ENCODE measurements at regions of chr2 and their contacts with region 1.

Region 1: DNA sequence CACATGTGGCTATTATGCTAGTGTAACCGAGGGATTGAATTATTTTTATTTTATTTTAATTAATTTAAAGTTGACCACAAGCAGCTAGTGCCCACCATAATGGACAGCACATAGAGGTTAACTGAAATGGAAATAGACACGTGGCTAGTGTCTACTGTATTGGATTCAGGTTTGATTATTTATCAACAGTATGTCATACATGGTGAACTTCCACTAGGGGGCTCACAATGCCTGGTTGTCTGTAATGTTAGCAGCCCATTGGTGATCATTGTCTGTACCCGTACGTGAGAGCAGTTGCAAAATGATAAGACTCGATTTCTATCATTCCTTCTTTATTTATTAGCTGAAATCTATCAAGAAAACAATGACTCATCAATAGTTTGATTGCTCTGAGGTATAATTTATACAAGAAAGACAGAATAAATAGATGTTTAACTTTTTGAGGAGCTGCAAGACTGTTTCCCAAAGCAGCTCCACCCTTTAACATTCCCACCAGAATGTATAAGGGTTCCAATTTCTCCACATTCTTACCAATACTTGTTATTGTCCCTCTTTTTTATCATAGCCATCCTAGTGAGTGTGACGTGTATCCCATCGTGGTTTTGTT is 76.5 kb downstream of the CYBRD1 start:
- DNase-seq: peak in 4 of 10 donors; percentile 16 to 60 (median 31)
- H3K4me3 ChIP-seq: peak overlapping the region in 23 of 59 donors; percentile 4 to 50 (median 27)
- H3K27ac ChIP-seq: peak overlapping the region in 4 of 59 donors; percentile 6 to 50 (median 26)
- H3K27me3 ChIP-seq: no peaks in the 10 kb centered on the region
- CTCF ChIP-seq: peak; percentile 59 to 92 (median 83)

Region 2: GRCh38 chr2:171669121-171669520 is 70.3 kb after region 1 on chr2:
- intact Hi-C with region 1: loop called in 1 of 2 experiments (anchors 10 kb)
- DNase-seq: peak in 3 of 10 donors; percentile 9 to 49 (median 39)
- H3K4me3 ChIP-seq: peak overlapping the region in 3 of 59 donors; percentile 2 to 31 (median 4)
- H3K27ac ChIP-seq: peak overlapping the region; percentile 50 to 98 (median 91)
- H3K27me3 ChIP-seq: peaks cover 0 to 8% (median 0%) of the 10 kb centered on the region in 45 donors
- CTCF ChIP-seq: peak in 2 of 56 donors; percentile 12 to 15

Region 3: GRCh38 chr2:171837736-171838135 is 238.9 kb after region 1 on chr2:
- intact Hi-C with region 1: no loop called
- DNase-seq: no peak
- H3K4me3 ChIP-seq: no peak overlapping the region
- H3K27ac ChIP-seq: no peak overlapping the region
- H3K27me3 ChIP-seq: no peaks in the 10 kb centered on the region
- CTCF ChIP-seq: no peak